A673 (cell line): ENCODE measurements at regions of chr4 and their contacts with region 1.

Region 1: DNA sequence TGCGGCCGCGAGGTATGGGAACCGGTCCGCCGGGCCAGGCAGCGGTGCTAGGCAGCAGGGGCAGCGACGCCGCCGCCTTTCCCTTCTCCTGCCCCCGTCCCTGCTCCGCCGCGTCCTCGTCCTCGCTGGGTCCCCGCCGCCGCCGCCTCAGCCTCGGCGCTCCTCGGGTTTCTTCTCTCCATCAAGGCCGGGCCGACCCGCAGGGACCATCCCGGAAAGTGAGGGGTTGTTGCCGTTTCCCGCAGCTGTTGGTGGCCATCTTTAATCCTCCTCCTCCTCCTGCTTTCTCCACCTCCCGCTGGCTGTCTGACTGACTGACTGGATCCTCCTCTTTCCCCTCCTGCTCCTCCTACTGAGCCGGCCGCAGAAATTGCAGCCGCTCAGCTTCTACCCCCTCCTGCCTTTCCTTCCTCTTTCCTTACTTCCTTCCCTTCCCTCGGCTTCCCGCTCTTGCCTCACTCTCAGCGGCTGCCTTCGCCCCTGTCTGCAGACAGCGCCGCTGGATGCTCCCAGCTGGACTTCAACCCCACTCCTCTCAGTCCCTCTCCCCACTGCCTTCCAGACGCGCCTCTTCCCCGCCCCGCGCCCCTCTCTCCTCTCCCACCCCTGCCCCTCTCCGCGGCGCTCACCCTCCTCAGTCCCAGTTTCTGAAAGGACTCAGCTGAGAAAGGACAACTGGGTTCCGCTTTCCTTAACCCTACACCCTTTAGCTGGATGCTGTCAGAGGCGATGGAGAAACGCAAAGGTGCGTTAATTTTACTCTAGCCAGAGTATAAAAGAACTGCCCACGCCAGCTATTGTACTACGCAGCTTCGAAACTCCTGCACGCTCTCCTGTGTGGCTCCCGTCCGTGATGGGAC is at the start of gene WDFY3:
- DNase-seq: peak; percentile 89
- H3K4me3 ChIP-seq: peak within 1 kb of the TSS; percentile 81
- H3K27ac ChIP-seq: peak within 1 kb of the TSS; percentile 80
- H3K4me1 ChIP-seq: peaks cover 6% of the 10 kb centered on the region
- H3K27me3 ChIP-seq: no peaks in the 10 kb centered on the region
- CTCF ChIP-seq: 0 out of 2 replicates have a peak, but pooled peaks have one; percentile 12
- total RNA-seq, gene WDFY3: 42.9 and 43.4 TPM in 2 replicates

Region 2: DNA sequence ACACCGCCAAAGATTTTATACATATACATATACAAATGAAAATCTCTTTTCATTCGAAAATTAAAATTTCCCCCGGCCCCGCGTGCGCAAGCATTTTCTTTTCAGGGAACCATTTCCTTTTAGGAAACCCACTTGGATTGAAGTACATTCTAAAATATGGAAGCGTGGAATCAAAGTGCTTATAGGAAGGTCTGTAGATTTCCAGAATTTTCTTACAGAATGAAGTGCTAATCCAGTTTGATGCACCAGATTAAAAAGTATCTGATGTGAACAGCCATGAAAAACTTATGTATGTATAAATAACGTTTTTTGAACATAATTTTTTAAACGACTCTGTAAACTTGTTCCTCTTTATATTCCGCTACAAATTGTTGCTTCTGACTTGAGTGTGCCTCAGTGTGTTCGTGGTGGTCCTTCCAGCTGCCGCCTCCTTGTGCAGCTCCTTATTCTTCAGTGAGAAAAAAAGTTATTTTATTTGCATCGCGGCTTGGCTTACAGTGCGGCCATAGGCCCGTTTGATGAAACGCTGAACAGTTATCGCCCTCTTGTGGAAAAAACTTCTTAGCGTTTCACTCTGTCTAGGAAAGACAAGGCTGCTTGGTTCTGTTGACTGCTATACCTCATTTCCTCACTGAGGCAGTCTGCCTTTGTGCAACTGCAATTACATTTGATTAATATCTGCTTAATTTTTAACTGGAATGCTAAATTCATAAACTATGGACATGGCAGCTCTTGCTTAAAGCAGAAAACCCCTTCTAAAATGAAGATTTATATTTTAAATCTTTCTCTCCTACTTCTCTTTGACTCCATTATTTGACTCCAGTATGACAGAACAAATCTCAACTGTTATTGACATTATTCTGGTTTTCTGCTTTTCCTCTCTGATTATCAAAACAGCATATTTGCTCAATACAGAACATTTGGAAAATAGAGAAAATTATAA is 462.8 kb before region 1 on chr4:
- CTCF ChIA-PET with region 1: no interaction called
- POLR2A ChIA-PET with region 1: no interaction called
- intact Hi-C with region 1: loop called (anchors 10 kb)
- DNase-seq: peak; percentile 70
- H3K4me3 ChIP-seq: no peak overlapping the region
- H3K27ac ChIP-seq: no peak overlapping the region
- H3K4me1 ChIP-seq: no peaks in the 10 kb centered on the region
- H3K27me3 ChIP-seq: no peaks in the 10 kb centered on the region
- CTCF ChIP-seq: peak; percentile 65

Region 3: GRCh38 chr4:84582302-84583000 is 384.2 kb before region 1 on chr4:
- CTCF ChIA-PET with region 1: no interaction called
- POLR2A ChIA-PET with region 1: no interaction called
- intact Hi-C with region 1: loop called (anchors 2 kb)
- DNase-seq: peak; percentile 69
- H3K4me3 ChIP-seq: peak overlapping the region; percentile 56
- H3K27ac ChIP-seq: no peak overlapping the region
- H3K4me1 ChIP-seq: no peaks in the 10 kb centered on the region
- H3K27me3 ChIP-seq: peaks cover 18% of the 10 kb centered on the region
- CTCF ChIP-seq: no peak

Region 4: GRCh38 chr4:84606645-84607044 is 360.0 kb before region 1 on chr4:
- CTCF ChIA-PET with region 1: no interaction called
- POLR2A ChIA-PET with region 1: no interaction called
- intact Hi-C with region 1: no loop called
- DNase-seq: no peak
- H3K4me3 ChIP-seq: no peak overlapping the region
- H3K27ac ChIP-seq: no peak overlapping the region
- H3K4me1 ChIP-seq: no peaks in the 10 kb centered on the region
- H3K27me3 ChIP-seq: no peaks in the 10 kb centered on the region
- CTCF ChIP-seq: no peak

Region 5: GRCh38 chr4:84750253-84750959 is 216.2 kb before region 1 on chr4:
- CTCF ChIA-PET with region 1: no interaction called
- POLR2A ChIA-PET with region 1: no interaction called
- intact Hi-C with region 1: loop called (anchors 2 kb)
- DNase-seq: peak; percentile 46
- H3K4me3 ChIP-seq: no peak overlapping the region
- H3K27ac ChIP-seq: no peak overlapping the region
- H3K4me1 ChIP-seq: no peaks in the 10 kb centered on the region
- H3K27me3 ChIP-seq: no peaks in the 10 kb centered on the region
- CTCF ChIP-seq: peak; percentile 57

Region 6: DNA sequence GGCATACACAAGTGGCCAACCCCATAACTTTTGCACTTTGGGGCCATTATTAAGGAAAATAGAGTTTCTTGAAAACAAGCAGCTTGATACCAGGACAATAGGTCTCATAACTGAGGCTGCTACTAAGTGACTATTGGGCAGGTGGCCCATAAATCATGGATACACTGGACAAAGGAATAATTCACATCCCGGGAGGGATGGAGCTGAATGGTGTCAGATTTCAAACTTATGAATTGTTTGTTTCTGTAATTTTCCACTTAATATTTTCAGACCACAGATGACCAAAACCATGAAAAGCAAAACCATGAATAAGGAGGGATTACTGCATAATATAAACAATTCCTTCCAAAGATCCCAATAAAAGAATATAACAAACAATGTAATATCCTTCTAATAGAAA is 114.5 kb before region 1 on chr4:
- CTCF ChIA-PET with region 1: no interaction called
- POLR2A ChIA-PET with region 1: no interaction called
- intact Hi-C with region 1: loop called (anchors 10 kb)
- DNase-seq: no peak
- H3K4me3 ChIP-seq: no peak overlapping the region
- H3K27ac ChIP-seq: no peak overlapping the region
- H3K4me1 ChIP-seq: peaks cover 20% of the 10 kb centered on the region
- H3K27me3 ChIP-seq: no peaks in the 10 kb centered on the region
- CTCF ChIP-seq: no peak

Region 7: DNA sequence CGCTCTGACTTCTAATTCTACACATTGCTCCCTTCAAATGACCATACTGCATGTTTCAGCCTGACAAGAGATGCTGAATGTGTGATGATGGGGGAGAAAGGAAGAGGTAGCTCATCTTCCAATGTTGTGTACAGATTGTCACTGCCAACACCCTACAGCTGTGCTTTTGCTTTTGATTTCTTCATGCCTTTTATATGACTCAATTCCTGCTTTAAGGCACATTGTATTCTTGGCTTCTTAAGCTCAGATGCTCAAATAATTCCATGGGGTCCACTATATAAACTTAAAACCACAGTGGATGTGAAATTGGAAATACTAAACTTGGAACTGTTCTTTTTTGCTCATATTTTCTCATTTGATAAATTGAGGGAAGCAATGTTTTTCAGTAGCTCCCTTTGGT is 183.1 kb after region 1 on chr4:
- CTCF ChIA-PET with region 1: no interaction called
- POLR2A ChIA-PET with region 1: no interaction called
- intact Hi-C with region 1: no loop called
- DNase-seq: no peak
- H3K4me3 ChIP-seq: no peak overlapping the region
- H3K27ac ChIP-seq: no peak overlapping the region
- H3K4me1 ChIP-seq: no peaks in the 10 kb centered on the region
- H3K27me3 ChIP-seq: no peaks in the 10 kb centered on the region
- CTCF ChIP-seq: no peak